ENCODE measurements at regions of chr13 and their contacts with region 1.

Region 1: GRCh38 chr13:78137404-78138142 is 218.9 kb upstream of the EDNRB start:
- DNase-seq: peak; percentile 14
- ATAC-seq: peak; percentile 83
- H3K4me3 Mint-ChIP-seq: peak overlapping the region; percentile 20
- H3K27ac Mint-ChIP-seq: no peak overlapping the region
- H3K4me1 Mint-ChIP-seq: peaks cover 7% of the 10 kb centered on the region
- H3K27me3 Mint-ChIP-seq: no peaks in the 10 kb centered on the region
- CTCF ChIP-seq: peak; percentile 68

Region 2: DNA sequence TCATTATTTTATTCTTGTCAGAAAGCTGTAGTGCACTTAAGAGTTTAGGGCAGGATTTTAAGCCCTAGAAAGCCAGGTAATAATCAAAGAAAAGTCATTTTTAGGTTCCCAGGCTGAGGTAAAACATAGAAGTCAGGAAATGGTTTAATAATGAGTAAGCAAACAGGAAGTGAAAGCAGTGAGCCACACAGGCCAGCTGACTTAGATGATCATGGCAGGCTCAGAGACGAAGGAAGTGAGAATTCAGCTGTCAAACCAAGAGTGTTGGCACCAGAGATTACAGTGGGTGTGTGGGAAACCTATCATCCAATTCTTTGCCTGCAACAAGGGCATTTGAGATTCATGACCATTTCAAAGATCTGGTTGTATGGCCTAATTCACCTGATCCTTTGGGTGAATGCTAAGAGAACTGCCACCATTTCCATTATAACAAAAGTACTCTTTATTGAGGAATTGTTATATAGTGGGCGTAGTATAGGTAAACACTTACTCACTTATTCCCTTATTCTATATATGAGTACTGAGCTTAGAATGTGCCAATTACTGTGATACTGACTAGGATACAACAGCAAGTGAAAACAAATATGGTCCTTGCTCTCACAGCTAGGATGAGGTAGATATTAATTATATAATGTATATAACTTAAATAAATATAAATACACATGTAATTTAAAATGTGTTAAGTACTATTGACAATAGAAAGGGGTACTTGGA is 115.3 kb before region 1 on chr13:
- CTCF ChIA-PET with region 1: no interaction called
- POLR2A ChIA-PET with region 1: no interaction called
- intact Hi-C with region 1: no loop called
- DNase-seq: peak; percentile 77
- ATAC-seq: peak; percentile 99
- H3K4me3 Mint-ChIP-seq: no peak overlapping the region
- H3K27ac Mint-ChIP-seq: peak overlapping the region; percentile 53
- H3K4me1 Mint-ChIP-seq: peaks cover 10% of the 10 kb centered on the region
- H3K27me3 Mint-ChIP-seq: peaks cover 2% of the 10 kb centered on the region
- CTCF ChIP-seq: no peak

Region 3: DNA sequence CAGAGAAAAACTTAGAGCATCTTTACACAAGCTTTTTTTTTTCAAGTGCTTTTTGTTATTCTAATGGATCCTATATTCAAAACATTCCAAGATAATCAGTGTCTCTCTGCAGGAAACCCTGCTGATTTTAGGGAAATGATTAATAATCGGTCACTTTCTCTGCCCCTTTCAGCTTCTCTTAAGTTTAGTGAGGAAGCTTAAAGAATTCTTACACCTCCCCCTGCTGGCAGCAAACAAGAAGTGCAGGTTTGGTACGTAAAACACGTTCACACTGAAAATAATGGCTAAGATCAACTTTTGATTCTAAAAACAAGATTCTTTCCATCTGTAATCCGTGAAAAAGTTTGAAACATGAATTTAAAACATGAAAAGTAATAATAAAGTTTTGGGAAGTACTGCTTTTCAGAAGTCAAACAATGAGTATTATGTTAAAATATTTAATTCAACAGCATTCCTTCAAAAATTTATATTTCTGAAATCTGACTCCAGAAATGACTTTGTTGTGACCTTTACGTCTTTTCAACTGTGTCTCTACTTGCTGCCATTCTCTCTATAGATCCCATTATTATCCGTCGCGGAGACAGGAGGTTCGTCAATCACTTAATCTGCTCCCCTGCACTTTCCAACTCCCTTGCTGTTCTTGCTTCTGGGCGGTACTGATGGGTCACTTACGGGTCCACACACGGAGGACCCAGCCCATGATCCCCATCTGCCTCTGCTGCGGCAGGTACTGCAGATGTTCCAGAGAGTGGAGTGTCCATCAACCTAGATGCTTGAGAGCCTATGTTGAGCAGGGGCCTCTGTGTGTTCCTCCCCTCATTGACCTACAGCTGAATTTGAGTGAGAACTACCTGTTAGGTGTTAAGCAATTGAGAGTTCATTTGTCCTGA is 15.9 kb before region 1 on chr13:
- CTCF ChIA-PET with region 1: interaction called, 12 read pairs
- POLR2A ChIA-PET with region 1: no interaction called
- intact Hi-C with region 1: no loop called
- DNase-seq: peak; percentile 63
- ATAC-seq: peak; percentile 53
- H3K4me3 Mint-ChIP-seq: no peak overlapping the region
- H3K27ac Mint-ChIP-seq: no peak overlapping the region
- H3K4me1 Mint-ChIP-seq: peaks cover 3% of the 10 kb centered on the region
- H3K27me3 Mint-ChIP-seq: peaks cover 14% of the 10 kb centered on the region
- CTCF ChIP-seq: peak; percentile 86

Region 4: DNA sequence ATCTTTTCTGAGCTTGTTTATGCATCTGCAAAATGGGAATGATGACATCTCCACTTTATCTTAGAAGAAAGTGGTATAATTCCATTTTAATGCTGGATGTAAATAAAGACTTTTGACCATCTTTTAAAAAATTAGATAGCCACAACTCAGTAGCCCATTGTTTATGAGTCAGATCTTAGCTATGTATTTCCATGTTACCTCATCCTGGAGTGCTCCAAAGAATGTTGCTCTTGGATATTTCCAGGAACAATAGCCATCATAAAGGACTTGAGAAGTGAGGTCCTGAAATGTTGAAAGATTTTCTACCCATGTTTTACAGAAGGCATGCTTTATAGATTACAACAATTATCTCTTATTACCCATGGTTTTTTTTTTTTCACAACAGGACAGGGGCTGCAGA is 10.3 kb after region 1 on chr13:
- CTCF ChIA-PET with region 1: interaction called, 18 read pairs
- POLR2A ChIA-PET with region 1: interaction called, 3 read pairs
- intact Hi-C with region 1: no loop called
- DNase-seq: no peak
- ATAC-seq: no peak
- H3K4me3 Mint-ChIP-seq: no peak overlapping the region
- H3K27ac Mint-ChIP-seq: no peak overlapping the region
- H3K4me1 Mint-ChIP-seq: no peaks in the 10 kb centered on the region
- H3K27me3 Mint-ChIP-seq: peaks cover 2% of the 10 kb centered on the region
- CTCF ChIP-seq: no peak

Region 5: DNA sequence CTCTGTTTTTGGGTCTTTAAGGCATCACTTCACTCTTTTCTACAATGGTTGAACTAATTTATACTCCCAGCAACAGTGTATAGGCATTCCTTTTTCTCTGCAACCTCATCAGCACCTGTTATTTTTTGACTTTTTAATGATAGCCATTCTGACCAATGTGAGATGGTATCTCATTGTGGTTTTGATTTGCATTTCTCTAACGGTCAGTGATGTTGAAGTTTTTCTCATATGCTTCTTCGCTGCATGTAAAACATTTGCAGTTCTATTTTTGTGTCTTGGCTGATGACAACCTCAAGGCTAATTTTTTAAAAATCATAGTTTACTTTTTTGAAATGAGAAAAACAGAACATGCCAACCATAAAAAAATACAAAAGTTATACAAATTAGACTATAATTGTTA is 39.3 kb after region 1 on chr13:
- CTCF ChIA-PET with region 1: no interaction called
- POLR2A ChIA-PET with region 1: no interaction called
- intact Hi-C with region 1: no loop called
- DNase-seq: no peak
- ATAC-seq: no peak
- H3K4me3 Mint-ChIP-seq: no peak overlapping the region
- H3K27ac Mint-ChIP-seq: no peak overlapping the region
- H3K4me1 Mint-ChIP-seq: no peaks in the 10 kb centered on the region
- H3K27me3 Mint-ChIP-seq: peaks cover 3% of the 10 kb centered on the region
- CTCF ChIP-seq: no peak

Region 6: GRCh38 chr13:78978381-78978998 is 840.9 kb after region 1 on chr13:
- CTCF ChIA-PET with region 1: interaction called, 26 read pairs
- POLR2A ChIA-PET with region 1: no interaction called
- intact Hi-C with region 1: loop called (anchors 2 kb)
- DNase-seq: peak; percentile 55
- ATAC-seq: peak; percentile 76
- H3K4me3 Mint-ChIP-seq: no peak overlapping the region
- H3K27ac Mint-ChIP-seq: no peak overlapping the region
- H3K4me1 Mint-ChIP-seq: no peaks in the 10 kb centered on the region
- H3K27me3 Mint-ChIP-seq: peaks cover 4% of the 10 kb centered on the region
- CTCF ChIP-seq: peak; percentile 74